ENCODE measurements at regions of chr15 and their contacts with region 1.

Region 1: GRCh38 chr15:89820666-89821611 is 6.3 kb upstream of the ANPEP start:
- DNase-seq: peak; percentile 95 to 98 (median 97)
- H3K4me3 ChIP-seq: no peak overlapping the region
- H3K4me3 Mint-ChIP-seq: peak overlapping the region; percentile 60 to 69
- H3K27ac ChIP-seq: peak overlapping the region; percentile 73 to 93
- H3K27ac Mint-ChIP-seq: peak overlapping the region; percentile 96 to 100 (median 99)
- H3K4me1 ChIP-seq: peaks cover 55 to 60% of the 10 kb centered on the region in 2 donors
- H3K4me1 Mint-ChIP-seq: peaks cover 55% of the 10 kb centered on the region
- H3K27me3 ChIP-seq: no peaks in the 10 kb centered on the region
- H3K27me3 Mint-ChIP-seq: peaks cover 0 to 1% (median 0%) of the 10 kb centered on the region in 3 donors
- CTCF ChIP-seq: no peak

Region 2: GRCh38 chr15:89781891-89782618 is 38.9 kb before region 1 on chr15:
- intact Hi-C with region 1: loop called in 1 of 2 experiments (anchors 2 kb)
- DNase-seq: peak; percentile 79 to 88 (median 81)
- H3K4me3 ChIP-seq: peak overlapping the region in 1 of 3 experiments; percentile 39
- H3K4me3 Mint-ChIP-seq: peak overlapping the region; percentile 11 to 62
- H3K27ac ChIP-seq: peak overlapping the region; percentile 36 to 78
- H3K27ac Mint-ChIP-seq: peak overlapping the region; percentile 84 to 96 (median 94)
- H3K4me1 ChIP-seq: peaks cover 28 to 43% of the 10 kb centered on the region in 2 donors
- H3K4me1 Mint-ChIP-seq: peaks cover 37% of the 10 kb centered on the region
- H3K27me3 ChIP-seq: peaks cover 0 to 2% of the 10 kb centered on the region in 2 donors
- H3K27me3 Mint-ChIP-seq: peaks cover 2 to 7% (median 6%) of the 10 kb centered on the region in 3 donors
- CTCF ChIP-seq: no peak

Region 3: DNA sequence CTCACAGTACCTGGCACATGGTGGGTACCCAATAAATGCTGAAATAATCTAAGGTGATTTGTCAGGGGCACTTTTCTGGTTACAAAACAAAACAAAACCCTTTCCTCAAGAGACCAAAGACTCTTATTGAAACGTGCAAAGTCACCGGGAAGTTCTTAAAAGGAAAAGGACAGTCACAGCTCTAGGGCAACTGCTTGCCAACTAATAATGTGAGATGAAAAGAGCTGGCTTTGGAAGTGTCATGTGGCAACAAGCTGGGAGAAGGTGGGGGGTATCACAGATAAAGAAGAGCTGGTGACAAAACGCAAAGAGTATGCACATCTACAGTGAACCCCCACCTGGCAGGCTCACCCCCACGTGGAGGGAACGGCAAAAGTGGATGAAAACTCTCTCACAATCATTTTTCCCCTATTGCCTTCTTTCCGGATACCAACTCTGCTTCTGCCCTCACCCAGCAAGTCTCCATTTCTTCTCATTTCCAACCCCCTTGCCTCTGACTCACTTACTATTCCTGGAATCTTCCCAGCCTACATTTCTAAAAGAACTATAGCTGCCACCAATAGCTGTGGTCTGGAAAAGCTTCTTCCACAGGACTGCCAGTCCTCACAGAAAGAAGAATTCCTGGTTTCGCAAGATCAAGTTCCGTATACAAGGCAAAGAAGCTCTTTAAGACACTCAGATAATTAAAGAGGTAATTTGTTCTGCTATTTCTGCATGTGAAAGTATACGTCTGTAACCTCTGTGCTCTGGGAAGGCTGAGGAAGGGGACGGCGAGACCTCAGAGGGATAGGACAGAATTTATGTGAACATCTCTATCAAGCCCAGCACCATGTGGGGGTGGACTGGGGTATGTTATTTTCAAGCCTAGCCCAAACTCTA is 15.6 kb after region 1 on chr15:
- intact Hi-C with region 1: loop called in 1 of 2 experiments (anchors 2 kb)
- DNase-seq: peak in 2 of 3 donors; percentile 71 to 84
- H3K4me3 ChIP-seq: peak overlapping the region in 1 of 3 experiments; percentile 45
- H3K4me3 Mint-ChIP-seq: peak overlapping the region; percentile 7 to 64
- H3K27ac ChIP-seq: peak overlapping the region; percentile 86 to 93
- H3K27ac Mint-ChIP-seq: peak overlapping the region; percentile 91 to 98 (median 96)
- H3K4me1 ChIP-seq: peaks cover 67 to 71% of the 10 kb centered on the region in 2 donors
- H3K4me1 Mint-ChIP-seq: peaks cover 70% of the 10 kb centered on the region
- H3K27me3 ChIP-seq: no peaks in the 10 kb centered on the region
- H3K27me3 Mint-ChIP-seq: peaks cover 0 to 2% (median 0%) of the 10 kb centered on the region in 3 donors
- CTCF ChIP-seq: no peak

Region 4: DNA sequence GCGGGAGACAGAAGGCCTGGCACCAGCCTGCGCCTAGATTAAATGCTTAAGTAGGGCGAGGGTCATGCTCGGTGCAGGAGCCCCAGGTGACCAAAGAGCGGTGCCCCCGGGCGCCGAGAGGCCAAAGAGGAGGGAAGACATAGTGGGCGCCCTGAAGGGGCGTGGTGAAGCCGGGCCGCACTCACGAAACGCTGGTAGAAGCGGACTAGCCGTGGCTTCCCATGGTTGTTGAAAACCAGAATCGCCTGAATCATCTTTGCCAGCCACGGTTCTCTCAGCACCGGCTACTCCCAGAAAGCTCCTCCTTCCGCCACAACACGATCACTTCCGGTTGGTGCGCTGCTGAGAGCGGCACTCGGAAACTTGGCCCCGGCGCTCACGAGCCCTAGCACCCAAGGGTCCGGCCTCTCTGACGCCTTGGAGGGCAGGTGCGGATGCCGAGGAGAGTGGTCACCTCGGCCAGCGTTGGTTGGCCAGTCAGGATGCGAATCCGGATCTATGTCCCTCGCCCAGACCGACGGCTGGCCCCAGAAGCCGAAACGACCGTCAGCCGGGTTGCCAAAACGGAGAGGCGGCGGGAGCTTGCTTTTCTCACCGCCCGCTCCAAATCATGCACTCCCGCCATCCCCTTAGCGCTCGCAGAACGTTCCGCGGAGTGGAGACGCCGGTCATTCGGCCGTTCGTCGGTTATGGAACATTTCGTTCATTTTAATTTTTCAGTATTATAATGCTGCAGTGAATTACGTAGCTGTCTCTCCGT is 72.9 kb after region 1 on chr15 and contains the start of gene AP3S2:
- intact Hi-C with region 1: loop called in 1 of 2 experiments (anchors 2 kb)
- DNase-seq: peak; percentile 90 to 94 (median 92)
- H3K4me3 ChIP-seq: peak within 1 kb of the TSS; percentile 70 to 97 (median 75)
- H3K4me3 Mint-ChIP-seq: peak within 1 kb of the TSS; percentile 95 to 98
- H3K27ac ChIP-seq: peak within 1 kb of the TSS; percentile 94 to 99
- H3K27ac Mint-ChIP-seq: peak within 1 kb of the TSS; percentile 98 to 100 (median 99)
- H3K4me1 ChIP-seq: peaks cover 35 to 57% of the 10 kb centered on the region in 2 donors
- H3K4me1 Mint-ChIP-seq: peaks cover 48% of the 10 kb centered on the region
- H3K27me3 ChIP-seq: no peaks in the 10 kb centered on the region
- H3K27me3 Mint-ChIP-seq: peaks cover 0 to 3% (median 1%) of the 10 kb centered on the region in 3 donors
- CTCF ChIP-seq: no peak
- polyA plus RNA-seq, gene AP3S2: 30.8 to 41.2 (median 32.4) TPM